Heart left ventricle (tissue), 16 donors: ENCODE measurements at regions of chr3 and their contacts with region 1.

Region 1: GRCh38 chr3:9792405-9793160 is at the starts of genes ARPC4 and TADA3:
- DNase-seq: peak; percentile 95 to 97 (median 96)
- ATAC-seq: peak; percentile 94 to 96 (median 94)
- H3K4me3 ChIP-seq: peak within 1 kb of the TSS; percentile 66 to 100 (median 92)
- H3K27ac ChIP-seq: peak within 1 kb of the TSS; percentile 89 to 99 (median 97)
- H3K4me1 ChIP-seq: peaks cover 0 to 57% (median 24%) of the 10 kb centered on the region in 12 donors
- H3K27me3 ChIP-seq: no peaks in the 10 kb centered on the region
- CTCF ChIP-seq: peak in 2 of 12 donors; percentile 18 to 19
- POLR2A ChIP-seq: peak in 1 of 2 donors; percentile 66
- total RNA-seq, gene ARPC4: 48.8 to 147 (median 79.7) TPM
- total RNA-seq, gene TADA3: 32.8 to 61.5 (median 45.9) TPM

Region 2: GRCh38 chr3:9721015-9721699 is 71.4 kb before region 1 on chr3:
- intact Hi-C with region 1: no loop called
- DNase-seq: no peak
- ATAC-seq: no peak
- H3K4me3 ChIP-seq: no peak overlapping the region
- H3K27ac ChIP-seq: no peak overlapping the region
- H3K4me1 ChIP-seq: peaks cover 0 to 9% (median 0%) of the 10 kb centered on the region in 12 donors
- H3K27me3 ChIP-seq: no peaks in the 10 kb centered on the region
- CTCF ChIP-seq: no peak
- POLR2A ChIP-seq: no peak

Region 3: DNA sequence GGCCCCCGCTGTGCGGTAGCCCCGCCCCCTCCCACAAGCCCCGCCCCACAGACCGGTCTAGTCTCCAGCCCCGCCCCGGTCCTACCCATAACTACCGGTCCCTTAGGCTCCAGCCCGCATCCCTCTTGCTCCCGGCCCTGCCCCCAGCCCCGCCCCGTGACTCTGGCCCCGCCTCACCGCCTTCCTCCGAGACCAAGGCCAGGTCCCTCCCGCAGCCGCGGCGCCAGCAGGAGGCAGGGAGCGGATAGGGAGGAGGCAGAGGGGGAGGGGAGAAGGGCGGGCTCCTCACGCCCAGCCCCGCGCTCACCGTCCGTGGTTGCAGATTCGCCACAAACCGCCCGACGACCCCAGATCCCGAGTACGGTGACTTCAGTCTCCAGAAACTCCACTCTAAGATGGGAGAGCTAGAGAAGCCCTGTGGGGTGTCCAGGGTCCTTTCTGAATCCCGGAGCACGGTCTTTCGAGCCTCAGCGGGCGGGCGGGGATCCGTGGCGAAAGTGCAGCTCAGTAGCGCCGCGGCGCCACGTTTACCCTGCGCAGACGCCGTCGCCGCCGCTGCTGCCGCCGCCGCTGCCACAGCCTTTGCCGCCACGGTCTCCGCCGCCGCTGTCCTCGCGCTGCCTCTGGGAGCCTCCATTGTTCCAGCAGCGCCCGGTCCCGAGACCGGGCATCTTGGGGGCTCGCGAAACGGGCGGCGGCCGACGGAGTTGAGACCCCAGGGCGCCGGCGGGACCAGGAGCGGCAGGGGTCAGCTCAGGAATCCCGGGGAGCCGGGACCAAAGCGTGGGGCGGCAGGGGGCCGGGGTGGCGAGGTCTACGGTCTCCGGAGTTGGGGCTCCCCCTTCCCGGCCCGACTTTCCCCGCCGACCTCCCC is 61.1 kb before region 1 on chr3 and contains the start of gene BRPF1:
- intact Hi-C with region 1: loop called in 4 of 10 experiments (anchors 2 to 5 kb)
- DNase-seq: peak; percentile 99 to 100 (median 100)
- ATAC-seq: peak; percentile 99 to 100 (median 99)
- H3K4me3 ChIP-seq: peak within 1 kb of the TSS; percentile 82 to 100 (median 98)
- H3K27ac ChIP-seq: peak within 1 kb of the TSS; percentile 91 to 100 (median 97)
- H3K4me1 ChIP-seq: peaks cover 9 to 52% (median 24%) of the 10 kb centered on the region in 12 donors
- H3K27me3 ChIP-seq: no peaks in the 10 kb centered on the region
- CTCF ChIP-seq: peak in 5 of 12 donors; percentile 8 to 28 (median 21)
- POLR2A ChIP-seq: peak in 1 of 2 donors; percentile 61
- total RNA-seq, gene BRPF1: 9.0 to 17.8 (median 10.6) TPM

Region 4: DNA sequence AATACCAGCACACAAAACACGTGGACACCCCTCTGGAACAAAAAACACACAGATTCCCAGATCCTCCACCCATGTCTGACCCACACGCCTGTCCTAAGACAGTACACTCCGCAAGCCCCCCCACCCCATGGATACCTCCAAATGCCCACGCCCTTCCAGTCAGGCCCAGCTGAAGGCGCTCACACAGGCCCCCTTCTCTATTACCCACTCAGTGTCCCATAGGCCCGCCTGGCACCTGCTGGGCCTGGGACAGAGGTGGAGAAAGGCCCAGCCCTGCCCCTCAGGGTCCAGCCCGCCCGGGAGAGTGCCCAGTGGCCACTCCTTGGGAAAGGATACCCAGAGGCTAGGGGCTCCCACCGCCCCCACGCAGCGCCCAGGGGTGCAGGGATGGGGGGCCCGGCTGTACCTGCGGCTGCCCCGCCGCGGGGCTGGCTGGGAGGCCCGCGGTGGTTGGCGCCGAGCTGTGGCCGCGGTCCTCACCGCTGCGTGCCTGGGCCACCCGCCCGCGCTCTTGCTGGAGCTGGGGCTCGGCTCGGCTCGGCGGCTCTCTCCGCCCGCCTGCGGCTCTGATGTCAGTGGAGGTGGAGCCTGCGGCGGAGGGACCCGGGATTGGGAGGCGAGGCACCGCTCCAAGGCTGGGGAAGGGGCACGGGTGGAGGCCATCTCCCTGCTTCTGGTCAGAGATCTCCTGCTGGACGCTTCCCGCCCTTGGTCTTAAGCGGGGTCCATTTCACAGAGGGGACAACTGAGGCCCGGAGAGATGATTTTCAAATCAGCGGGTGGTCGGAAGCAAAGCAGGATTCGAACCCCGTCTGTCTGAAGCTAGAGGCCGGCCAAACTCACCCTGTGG is 22.9 kb before region 1 on chr3 and contains the start of gene CAMK1:
- intact Hi-C with region 1: loop called in 1 of 10 experiments (anchors 2 kb)
- DNase-seq: peak; percentile 85 to 93 (median 88)
- ATAC-seq: peak; percentile 78 to 96 (median 92)
- H3K4me3 ChIP-seq: peak within 1 kb of the TSS; percentile 58 to 96 (median 78)
- H3K27ac ChIP-seq: peak within 1 kb of the TSS; percentile 51 to 90 (median 84)
- H3K4me1 ChIP-seq: peaks cover 0 to 46% (median 31%) of the 10 kb centered on the region in 12 donors
- H3K27me3 ChIP-seq: no peaks in the 10 kb centered on the region
- CTCF ChIP-seq: no peak
- POLR2A ChIP-seq: peak in 1 of 2 donors; percentile 86
- total RNA-seq, gene CAMK1: 9.7 to 26.3 (median 14.7) TPM

Region 5: DNA sequence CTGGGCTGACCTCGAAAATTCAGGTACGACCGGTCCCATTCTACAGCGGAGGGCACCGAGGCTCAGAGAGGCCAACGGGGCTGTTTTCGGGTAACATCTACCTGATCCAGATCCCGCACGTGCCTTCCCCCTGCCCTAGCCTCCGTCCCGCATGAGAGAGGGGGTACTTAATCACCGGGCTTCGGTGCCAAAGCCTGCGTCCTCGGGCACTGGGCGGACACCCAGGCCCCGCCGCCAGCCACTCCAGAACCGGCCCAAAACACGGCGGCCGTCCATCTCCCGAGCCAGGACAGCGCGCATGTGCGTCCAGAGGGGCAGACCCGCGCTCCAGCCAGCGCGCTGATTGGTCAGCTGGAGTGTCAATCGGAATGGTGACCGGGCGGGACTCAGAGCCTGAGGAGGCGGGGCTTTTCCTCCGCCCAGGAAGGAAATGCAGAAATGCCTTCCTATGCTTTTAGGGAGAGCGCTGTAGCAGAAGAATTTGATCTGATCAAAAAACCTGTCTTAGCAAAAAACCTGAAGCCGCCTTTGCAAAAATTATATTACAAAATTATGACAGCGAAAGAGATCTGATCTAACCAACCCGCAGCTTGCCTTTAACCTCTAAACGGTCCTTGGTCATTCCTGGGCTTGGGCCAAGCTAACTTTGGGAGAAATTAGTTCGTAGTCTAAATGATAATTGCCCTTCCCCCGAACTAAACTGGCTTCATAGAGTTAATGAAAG is 51.3 kb after region 1 on chr3 and contains the start of gene RPUSD3:
- intact Hi-C with region 1: loop called in 2 of 10 experiments (anchors 2 to 10 kb)
- DNase-seq: peak; percentile 98 to 100 (median 99)
- ATAC-seq: peak; percentile 99 to 100 (median 99)
- H3K4me3 ChIP-seq: peak within 1 kb of the TSS; percentile 43 to 94 (median 76)
- H3K27ac ChIP-seq: peak within 1 kb of the TSS; percentile 43 to 87 (median 86)
- H3K4me1 ChIP-seq: peaks cover 0 to 21% (median 8%) of the 10 kb centered on the region in 12 donors
- H3K27me3 ChIP-seq: no peaks in the 10 kb centered on the region
- CTCF ChIP-seq: no peak
- POLR2A ChIP-seq: peak in 1 of 2 donors; percentile 87
- total RNA-seq, gene RPUSD3: 25.8 to 68.6 (median 31.1) TPM

Region 6: GRCh38 chr3:10010486-10011465 is 218.2 kb after region 1 on chr3:
- intact Hi-C with region 1: loop called in 1 of 10 experiments (anchors 5 kb)
- DNase-seq: peak; percentile 95 to 99 (median 97)
- ATAC-seq: peak; percentile 88 to 92 (median 90)
- H3K4me3 ChIP-seq: peak overlapping the region; percentile 39 to 90 (median 66)
- H3K27ac ChIP-seq: peak overlapping the region in 10 of 12 donors; percentile 17 to 82 (median 58)
- H3K4me1 ChIP-seq: peaks cover 3 to 44% (median 32%) of the 10 kb centered on the region in 12 donors
- H3K27me3 ChIP-seq: no peaks in the 10 kb centered on the region
- CTCF ChIP-seq: no peak
- POLR2A ChIP-seq: peak; percentile 53 to 73